CD4-positive, alpha-beta T cell (primary cell): ENCODE measurements at regions of chr12 and their contacts with region 1.

Region 1: GRCh38 chr12:43848786-43849185 is 12.9 kb downstream of the TMEM117 start:
- DNase-seq: no peak
- ATAC-seq: no peak
- H3K4me3 ChIP-seq: no peak overlapping the region
- H3K4me3 Mint-ChIP-seq: no peak overlapping the region
- H3K27ac ChIP-seq: no peak overlapping the region
- H3K27ac Mint-ChIP-seq: no peak overlapping the region
- H3K4me1 ChIP-seq: no peaks in the 10 kb centered on the region
- H3K4me1 Mint-ChIP-seq: no peaks in the 10 kb centered on the region
- H3K27me3 ChIP-seq: no peaks in the 10 kb centered on the region
- H3K27me3 Mint-ChIP-seq: no peaks in the 10 kb centered on the region
- CTCF ChIP-seq: no peak

Region 2: GRCh38 chr12:43812906-43813305 is 35.9 kb before region 1 on chr12:
- CTCF ChIA-PET with region 1: no interaction called
- POLR2A ChIA-PET with region 1: no interaction called
- intact Hi-C with region 1: loop called in 1 of 2 experiments (anchors 5 kb)
- DNase-seq: no peak
- ATAC-seq: no peak
- H3K4me3 ChIP-seq: no peak overlapping the region
- H3K4me3 Mint-ChIP-seq: no peak overlapping the region
- H3K27ac ChIP-seq: no peak overlapping the region
- H3K27ac Mint-ChIP-seq: no peak overlapping the region
- H3K4me1 ChIP-seq: no peaks in the 10 kb centered on the region
- H3K4me1 Mint-ChIP-seq: peaks cover 7% of the 10 kb centered on the region
- H3K27me3 ChIP-seq: no peaks in the 10 kb centered on the region
- H3K27me3 Mint-ChIP-seq: no peaks in the 10 kb centered on the region
- CTCF ChIP-seq: no peak

Region 3: GRCh38 chr12:45122768-45123380 is 1274.1 kb after region 1 on chr12:
- CTCF ChIA-PET with region 1: no interaction called
- POLR2A ChIA-PET with region 1: no interaction called
- intact Hi-C with region 1: no loop called
- DNase-seq: no peak
- ATAC-seq: no peak
- H3K4me3 ChIP-seq: no peak overlapping the region
- H3K4me3 Mint-ChIP-seq: no peak overlapping the region
- H3K27ac ChIP-seq: no peak overlapping the region
- H3K27ac Mint-ChIP-seq: no peak overlapping the region
- H3K4me1 ChIP-seq: no peaks in the 10 kb centered on the region
- H3K4me1 Mint-ChIP-seq: no peaks in the 10 kb centered on the region
- H3K27me3 ChIP-seq: no peaks in the 10 kb centered on the region
- H3K27me3 Mint-ChIP-seq: no peaks in the 10 kb centered on the region
- CTCF ChIP-seq: no peak